ENCODE measurements at regions of chr20 and their contacts with region 1.

Region 1: GRCh38 chr20:52312132-52312729 is 120.7 kb upstream of the ZFP64 start:
- DNase-seq: peak; percentile 70
- H3K4me3 ChIP-seq: peak overlapping the region in 1 of 2 experiments; percentile 14; a peak in 1 of 4 replicates
- H3K27ac ChIP-seq: no peak overlapping the region
- H3K4me1 ChIP-seq: peaks cover 0 to 4% of the 10 kb centered on the region in 2 experiments; a peak in 2 of 4 replicates
- H3K27me3 ChIP-seq: no peaks in the 10 kb centered on the region
- CTCF ChIP-seq: peak; percentile 86
- EP300 ChIP-seq: no peak
- RAD21 ChIP-seq: peak; percentile 89

Region 2: DNA sequence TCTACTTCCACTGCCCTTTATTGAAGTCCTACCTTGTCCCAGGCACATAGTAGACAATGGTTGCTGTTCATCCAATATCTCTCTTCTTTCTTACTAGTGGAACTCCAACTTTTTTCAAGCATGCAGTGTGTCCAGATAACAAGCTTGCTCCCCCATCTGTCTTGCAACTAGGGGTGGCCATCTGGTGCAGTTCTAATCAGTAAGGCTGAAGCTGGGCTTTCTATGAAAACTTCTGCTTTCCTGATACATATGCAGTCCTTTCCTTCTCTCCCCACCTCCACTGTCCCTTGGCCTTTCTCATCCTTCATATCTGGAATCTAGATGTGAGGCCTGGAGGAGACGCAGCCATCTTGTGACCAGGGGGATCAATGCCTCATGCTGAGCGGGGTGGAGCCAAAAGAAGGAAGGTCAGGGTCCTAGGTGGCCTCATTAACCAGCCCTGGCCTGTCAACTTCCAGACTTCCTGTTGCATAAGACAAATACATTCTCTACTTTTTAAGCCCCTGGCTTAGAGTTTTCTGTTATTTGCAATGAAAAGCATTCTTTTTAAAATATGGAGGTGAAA is 61.0 kb before region 1 on chr20:
- CTCF ChIA-PET with region 1: interaction called, 56 read pairs
- POLR2A ChIA-PET with region 1: no interaction called
- DNase-seq: no peak
- H3K4me3 ChIP-seq: no peak overlapping the region
- H3K27ac ChIP-seq: no peak overlapping the region
- H3K4me1 ChIP-seq: no peaks in the 10 kb centered on the region
- H3K27me3 ChIP-seq: no peaks in the 10 kb centered on the region
- CTCF ChIP-seq: no peak
- EP300 ChIP-seq: no peak
- RAD21 ChIP-seq: no peak

Region 3: GRCh38 chr20:52295556-52295955 is 16.7 kb before region 1 on chr20:
- CTCF ChIA-PET with region 1: interaction called, 35 read pairs
- POLR2A ChIA-PET with region 1: no interaction called
- DNase-seq: no peak
- H3K4me3 ChIP-seq: no peak overlapping the region
- H3K27ac ChIP-seq: no peak overlapping the region
- H3K4me1 ChIP-seq: peaks cover 2 to 4% of the 10 kb centered on the region in 2 experiments; a peak in 2 of 4 replicates
- H3K27me3 ChIP-seq: no peaks in the 10 kb centered on the region
- CTCF ChIP-seq: no peak
- EP300 ChIP-seq: no peak
- RAD21 ChIP-seq: no peak

Region 4: DNA sequence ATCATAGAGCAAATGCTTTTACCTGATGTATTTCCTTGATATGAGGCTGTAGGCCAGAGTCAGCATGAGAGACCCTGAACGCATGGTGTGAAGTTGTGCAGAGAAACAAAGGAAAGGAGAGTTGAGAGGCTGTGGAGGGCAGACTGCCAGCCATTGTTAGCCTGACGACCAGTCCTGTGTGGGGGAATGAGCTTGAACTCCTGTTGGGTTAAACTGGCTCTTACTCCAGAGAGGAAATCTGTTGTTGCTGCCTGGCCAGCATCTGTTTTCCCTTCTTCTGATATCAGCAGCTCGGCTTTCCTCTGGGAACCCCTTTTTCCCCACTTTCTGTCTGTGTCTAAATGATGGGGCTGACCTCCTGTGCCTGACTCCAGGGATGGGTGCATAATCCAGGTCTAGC is 37.6 kb after region 1 on chr20:
- CTCF ChIA-PET with region 1: interaction called, 10 read pairs
- POLR2A ChIA-PET with region 1: no interaction called
- DNase-seq: no peak
- H3K4me3 ChIP-seq: no peak overlapping the region
- H3K27ac ChIP-seq: no peak overlapping the region; a peak in 1 of 4 replicates
- H3K4me1 ChIP-seq: peaks cover 0 to 10% of the 10 kb centered on the region in 2 experiments; a peak in 2 of 4 replicates
- H3K27me3 ChIP-seq: no peaks in the 10 kb centered on the region
- CTCF ChIP-seq: no peak
- EP300 ChIP-seq: no peak
- RAD21 ChIP-seq: no peak

Region 5: GRCh38 chr20:52801628-52802006 is 489.4 kb after region 1 on chr20:
- CTCF ChIA-PET with region 1: interaction called, 37 read pairs
- POLR2A ChIA-PET with region 1: interaction called, 3 read pairs
- DNase-seq: peak; percentile 50
- H3K4me3 ChIP-seq: no peak overlapping the region
- H3K27ac ChIP-seq: peak overlapping the region in 1 of 2 experiments; percentile 86; a peak in 2 of 4 replicates
- H3K4me1 ChIP-seq: peaks cover 0 to 16% of the 10 kb centered on the region in 2 experiments; a peak in 2 of 4 replicates
- H3K27me3 ChIP-seq: no peaks in the 10 kb centered on the region
- CTCF ChIP-seq: no peak
- EP300 ChIP-seq: peak in 1 of 2 experiments; percentile 93; a peak in 2 of 4 replicates
- RAD21 ChIP-seq: peak; percentile 41; the same call in 1 of the 2 replicates

Region 6: DNA sequence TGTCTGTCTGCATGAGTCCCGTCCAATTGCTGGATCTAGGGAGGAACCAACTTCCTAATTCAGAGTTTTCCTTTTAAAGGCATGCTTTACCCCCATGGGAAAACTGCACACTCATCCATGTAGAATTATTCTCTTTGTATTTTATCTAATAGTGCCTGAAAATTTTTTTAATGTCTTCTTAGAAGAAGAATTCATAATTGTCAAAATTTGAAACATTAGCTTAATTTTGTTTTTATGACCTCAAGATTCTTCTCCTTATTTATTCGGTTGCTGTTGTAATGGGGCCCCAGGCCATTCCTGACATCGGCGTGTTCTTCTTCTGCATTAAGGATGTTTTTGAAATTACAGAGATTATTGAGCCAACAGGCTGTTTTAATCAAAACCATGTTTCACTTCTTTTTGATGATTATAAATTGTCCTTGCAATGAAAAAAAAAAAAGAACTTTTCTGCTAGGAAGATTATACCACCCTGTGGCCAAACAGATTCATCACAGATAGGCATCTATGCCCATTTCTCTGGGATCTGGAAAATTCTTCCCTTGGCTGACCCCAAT is 1181.2 kb after region 1 on chr20:
- CTCF ChIA-PET with region 1: interaction called, 27 read pairs
- POLR2A ChIA-PET with region 1: no interaction called
- DNase-seq: peak; percentile 34
- H3K4me3 ChIP-seq: no peak overlapping the region
- H3K27ac ChIP-seq: peak overlapping the region in 1 of 2 experiments; percentile 64; a peak in 2 of 4 replicates
- H3K4me1 ChIP-seq: peaks cover 0 to 19% of the 10 kb centered on the region in 2 experiments; a peak in 3 of 4 replicates
- H3K27me3 ChIP-seq: no peaks in the 10 kb centered on the region
- CTCF ChIP-seq: no peak
- EP300 ChIP-seq: peak in 1 of 2 experiments; percentile 96; a peak in 2 of 4 replicates
- RAD21 ChIP-seq: peak; percentile 79